ENCODE measurements at regions of chr12 and their contacts with region 1.

Region 1: DNA sequence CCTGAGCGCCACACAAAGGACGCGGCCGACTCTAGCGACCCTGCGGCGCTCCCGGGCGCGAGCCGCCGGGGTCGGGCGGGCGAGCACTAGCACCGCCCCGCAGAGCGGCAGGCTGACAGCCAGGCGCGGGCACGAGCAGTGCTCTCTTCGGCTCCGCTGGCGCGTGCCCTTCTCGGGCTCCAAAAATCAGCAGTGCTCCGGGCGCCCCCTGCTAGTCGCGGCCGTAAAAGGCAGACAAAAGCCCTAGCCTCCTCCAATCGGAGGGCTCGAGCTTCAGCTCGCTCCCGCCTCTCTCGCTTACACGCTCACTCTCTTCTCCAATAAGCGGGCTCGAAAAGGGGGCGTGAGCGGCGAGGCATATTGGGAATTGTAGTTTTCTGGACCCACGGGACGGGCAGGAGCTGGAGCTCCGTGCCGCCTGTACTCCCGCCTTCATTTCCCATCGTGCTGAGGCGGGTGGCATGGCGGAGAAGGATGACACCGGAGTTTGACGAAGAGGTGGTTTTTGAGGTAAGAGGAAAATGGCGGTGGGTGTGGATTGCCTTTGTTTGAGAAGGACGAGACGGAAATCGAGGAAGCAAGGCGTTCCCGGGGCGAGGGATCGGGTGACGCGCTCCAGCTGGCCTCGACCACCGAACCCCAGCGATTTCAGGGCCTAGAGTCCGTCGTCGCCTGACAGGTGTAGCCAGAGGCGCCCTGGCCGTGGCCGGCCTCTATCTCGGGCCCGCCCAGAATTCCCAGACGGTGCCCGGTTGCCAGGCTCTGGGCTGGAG is at the starts of genes FGD6 and VEZT:
- DNase-seq: peak; percentile 92
- H3K4me3 ChIP-seq: peak within 1 kb of the TSS; percentile 85
- CTCF ChIP-seq: peak; percentile 73

Region 2: GRCh38 chr12:95204141-95204866 is 13.3 kb before region 1 on chr12:
- CTCF ChIA-PET with region 1: interaction called, 34 read pairs
- POLR2A ChIA-PET with region 1: interaction called, 5 read pairs
- DNase-seq: peak; percentile 65
- H3K4me3 ChIP-seq: no peak overlapping the region
- CTCF ChIP-seq: no peak

Measured in AG04449 (cell line).